B cell (primary cell): ENCODE measurements at regions of chr17 and their contacts with region 1.

Region 1: GRCh38 chr17:32319548-32319905 is 22.4 kb downstream of the C17orf75 start:
- DNase-seq: peak; percentile 93
- ATAC-seq: peak; percentile 98
- H3K4me3 ChIP-seq: peak overlapping the region in 4 of 5 experiments; percentile 28 to 62 (median 53)
- H3K4me3 Mint-ChIP-seq: peak overlapping the region; percentile 83
- H3K27ac ChIP-seq: peak overlapping the region in 1 of 2 donors; percentile 21
- H3K27ac Mint-ChIP-seq: peak overlapping the region; percentile 15
- H3K4me1 ChIP-seq: peaks cover 19 to 27% of the 10 kb centered on the region in 2 donors
- H3K4me1 Mint-ChIP-seq: peaks cover 26% of the 10 kb centered on the region
- H3K27me3 ChIP-seq: peaks cover 0 to 5% (median 0%) of the 10 kb centered on the region in 4 experiments
- H3K27me3 Mint-ChIP-seq: no peaks in the 10 kb centered on the region
- CTCF ChIP-seq: peak; percentile 85

Region 2: GRCh38 chr17:32006957-32007462 is 312.5 kb before region 1 on chr17 and contains the start of gene LRRC37B:
- CTCF ChIA-PET with region 1: interaction called, 4 read pairs
- POLR2A ChIA-PET with region 1: no interaction called
- intact Hi-C with region 1: loop called (anchors 5 kb)
- DNase-seq: peak; percentile 91
- ATAC-seq: peak; percentile 94
- H3K4me3 ChIP-seq: peak within 1 kb of the TSS; percentile 66 to 88 (median 78)
- H3K4me3 Mint-ChIP-seq: peak within 1 kb of the TSS; percentile 88
- H3K27ac ChIP-seq: peak within 1 kb of the TSS; percentile 6 to 59
- H3K27ac Mint-ChIP-seq: peak within 1 kb of the TSS; percentile 86
- H3K4me1 ChIP-seq: peaks cover 10 to 14% of the 10 kb centered on the region in 2 donors
- H3K4me1 Mint-ChIP-seq: peaks cover 34% of the 10 kb centered on the region
- H3K27me3 ChIP-seq: no peaks in the 10 kb centered on the region
- H3K27me3 Mint-ChIP-seq: no peaks in the 10 kb centered on the region
- CTCF ChIP-seq: peak; percentile 87
- total RNA-seq, gene LRRC37B: 40.6 and 46.7 TPM in 2 replicates

Region 3: DNA sequence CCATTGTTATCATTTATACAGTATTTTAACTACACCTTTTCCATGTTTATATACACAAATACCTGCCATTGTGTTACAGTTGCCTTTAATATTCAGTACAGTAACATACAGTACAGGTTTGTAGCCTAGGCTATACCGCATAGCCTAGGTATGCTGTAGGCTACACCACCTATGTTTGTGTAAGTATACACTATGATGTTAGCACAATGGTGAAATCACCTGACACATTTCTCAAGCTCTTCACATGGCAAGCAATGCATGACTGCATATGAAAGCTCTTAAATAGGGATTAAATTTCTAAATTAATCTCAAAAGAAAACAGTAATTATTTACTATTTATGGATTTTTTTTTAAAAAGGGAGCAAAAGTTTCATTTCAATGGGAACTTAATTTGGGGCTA is 300.3 kb before region 1 on chr17:
- CTCF ChIA-PET with region 1: no interaction called
- POLR2A ChIA-PET with region 1: no interaction called
- intact Hi-C with region 1: no loop called
- DNase-seq: no peak
- ATAC-seq: no peak
- H3K4me3 ChIP-seq: no peak overlapping the region
- H3K4me3 Mint-ChIP-seq: no peak overlapping the region
- H3K27ac ChIP-seq: no peak overlapping the region
- H3K27ac Mint-ChIP-seq: no peak overlapping the region
- H3K4me1 ChIP-seq: peaks cover 0 to 4% of the 10 kb centered on the region in 2 donors
- H3K4me1 Mint-ChIP-seq: peaks cover 7% of the 10 kb centered on the region
- H3K27me3 ChIP-seq: no peaks in the 10 kb centered on the region
- H3K27me3 Mint-ChIP-seq: no peaks in the 10 kb centered on the region
- CTCF ChIP-seq: no peak

Region 4: GRCh38 chr17:32206861-32207260 is 112.7 kb before region 1 on chr17:
- CTCF ChIA-PET with region 1: interaction called, 15 read pairs
- POLR2A ChIA-PET with region 1: interaction called, 3 read pairs
- intact Hi-C with region 1: no loop called
- DNase-seq: no peak
- ATAC-seq: no peak
- H3K4me3 ChIP-seq: no peak overlapping the region
- H3K4me3 Mint-ChIP-seq: no peak overlapping the region
- H3K27ac ChIP-seq: no peak overlapping the region
- H3K27ac Mint-ChIP-seq: no peak overlapping the region
- H3K4me1 ChIP-seq: no peaks in the 10 kb centered on the region
- H3K4me1 Mint-ChIP-seq: no peaks in the 10 kb centered on the region
- H3K27me3 ChIP-seq: no peaks in the 10 kb centered on the region
- H3K27me3 Mint-ChIP-seq: no peaks in the 10 kb centered on the region
- CTCF ChIP-seq: no peak

Region 5: GRCh38 chr17:32253117-32253611 is 66.4 kb before region 1 on chr17:
- CTCF ChIA-PET with region 1: interaction called, 36 read pairs
- POLR2A ChIA-PET with region 1: no interaction called
- intact Hi-C with region 1: loop called (anchors 1 kb)
- DNase-seq: peak; percentile 76
- ATAC-seq: peak; percentile 93
- H3K4me3 ChIP-seq: no peak overlapping the region
- H3K4me3 Mint-ChIP-seq: no peak overlapping the region
- H3K27ac ChIP-seq: no peak overlapping the region
- H3K27ac Mint-ChIP-seq: no peak overlapping the region
- H3K4me1 ChIP-seq: no peaks in the 10 kb centered on the region
- H3K4me1 Mint-ChIP-seq: no peaks in the 10 kb centered on the region
- H3K27me3 ChIP-seq: no peaks in the 10 kb centered on the region
- H3K27me3 Mint-ChIP-seq: peaks cover 13% of the 10 kb centered on the region
- CTCF ChIP-seq: peak; percentile 97

Region 6: DNA sequence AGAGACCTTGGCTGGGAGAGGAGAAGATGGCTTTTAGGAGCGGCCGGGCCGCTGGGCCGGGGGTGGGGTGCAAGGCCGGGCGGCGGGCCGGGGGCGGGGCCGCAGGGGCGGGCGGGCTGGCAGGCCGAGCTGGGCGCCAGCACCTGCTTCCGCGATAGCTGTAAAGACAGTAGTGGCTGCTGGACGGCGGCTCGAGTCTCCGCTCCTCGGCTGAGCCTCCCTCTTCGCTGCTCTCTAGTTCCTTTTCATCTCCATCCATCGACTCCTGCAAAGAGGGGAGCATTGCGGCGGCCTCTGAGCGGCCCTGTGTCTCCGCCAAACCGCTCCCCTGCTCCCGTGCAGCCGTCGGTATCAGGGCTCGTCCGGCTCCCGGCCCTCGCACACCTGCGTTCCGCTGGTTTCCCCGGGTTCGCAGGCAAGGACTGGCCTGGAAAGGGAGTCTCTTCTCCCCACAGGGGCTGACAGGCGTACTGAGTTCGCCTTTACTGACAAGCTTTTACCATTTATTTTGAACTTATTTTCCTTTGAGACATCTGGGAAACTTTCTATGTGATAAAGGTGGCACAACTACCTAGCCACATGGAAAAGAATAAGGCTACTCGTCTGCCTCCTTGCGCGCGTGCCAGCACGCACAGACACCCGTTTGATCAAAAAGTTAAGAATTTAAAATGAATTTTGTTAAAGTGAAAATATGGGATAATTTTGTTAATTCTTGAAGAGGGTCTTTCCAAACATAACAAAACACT is 22.5 kb after region 1 on chr17 and contains the start of gene C17orf75:
- CTCF ChIA-PET with region 1: interaction called, 7 read pairs
- POLR2A ChIA-PET with region 1: interaction called, 6 read pairs
- intact Hi-C with region 1: loop called (anchors 1 kb)
- DNase-seq: peak; percentile 86
- ATAC-seq: peak; percentile 85
- H3K4me3 ChIP-seq: peak within 1 kb of the TSS; percentile 57 to 73 (median 68)
- H3K4me3 Mint-ChIP-seq: peak within 1 kb of the TSS; percentile 96
- H3K27ac ChIP-seq: peak within 1 kb of the TSS; percentile 71 to 90
- H3K27ac Mint-ChIP-seq: peak within 1 kb of the TSS; percentile 97
- H3K4me1 ChIP-seq: peaks cover 16 to 18% of the 10 kb centered on the region in 2 donors
- H3K4me1 Mint-ChIP-seq: peaks cover 25% of the 10 kb centered on the region
- H3K27me3 ChIP-seq: no peaks in the 10 kb centered on the region
- H3K27me3 Mint-ChIP-seq: no peaks in the 10 kb centered on the region
- CTCF ChIP-seq: no peak
- total RNA-seq, gene C17orf75: 24.5 and 25.3 TPM in 2 replicates

Region 7: GRCh38 chr17:32349854-32350665 is 30.5 kb after region 1 on chr17 and contains the start of gene ZNF207:
- CTCF ChIA-PET with region 1: interaction called, 3 read pairs
- POLR2A ChIA-PET with region 1: no interaction called
- intact Hi-C with region 1: loop called (anchors 2 kb)
- DNase-seq: peak; percentile 98
- ATAC-seq: peak; percentile 98
- H3K4me3 ChIP-seq: peak within 1 kb of the TSS; percentile 56 to 97 (median 89)
- H3K4me3 Mint-ChIP-seq: peak within 1 kb of the TSS; percentile 99
- H3K27ac ChIP-seq: peak within 1 kb of the TSS; percentile 86 to 98
- H3K27ac Mint-ChIP-seq: peak within 1 kb of the TSS; percentile 100
- H3K4me1 ChIP-seq: peaks cover 28 to 32% of the 10 kb centered on the region in 2 donors
- H3K4me1 Mint-ChIP-seq: peaks cover 35% of the 10 kb centered on the region
- H3K27me3 ChIP-seq: no peaks in the 10 kb centered on the region
- H3K27me3 Mint-ChIP-seq: no peaks in the 10 kb centered on the region
- CTCF ChIP-seq: no peak
- total RNA-seq, gene ZNF207: 314 and 332 TPM in 2 replicates